Activated T-helper 1 cell treated with anti-CD3 and anti-CD28 coated beads, Interleukin-12 subunit alpha, Interleukin-12 subunit beta, Interleukin-2, Interleukin-4 antibody, amounts not matched to agents 30 ng/mL and 10 ng/mL and 1 ng/mL, durations not matched to agents 14 hours and 24 hours and 36 hours (primary cell): ENCODE measurements at regions of chr17 and their contacts with region 1.

Region 1: GRCh38 chr17:38428112-38428642 is at the start of gene ARHGAP23:
- DNase-seq: peak; percentile 8
- H3K4me3 Mint-ChIP-seq: peak within 1 kb of the TSS; percentile 68
- H3K27ac Mint-ChIP-seq: peak within 1 kb of the TSS; percentile 21
- H3K4me1 Mint-ChIP-seq: peaks cover 6% of the 10 kb centered on the region
- H3K27me3 Mint-ChIP-seq: peaks cover 44% of the 10 kb centered on the region
- total RNA-seq, gene ARHGAP23: 0.57 and 0.88 TPM in 2 replicates

Region 2: GRCh38 chr17:38485146-38485468 is 56.9 kb after region 1 on chr17:
- intact Hi-C with region 1: loop called (anchors 1 kb)
- DNase-seq: no peak
- H3K4me3 Mint-ChIP-seq: no peak overlapping the region
- H3K27ac Mint-ChIP-seq: no peak overlapping the region
- H3K4me1 Mint-ChIP-seq: peaks cover 4% of the 10 kb centered on the region
- H3K27me3 Mint-ChIP-seq: peaks cover 6% of the 10 kb centered on the region

Region 3: GRCh38 chr17:38498186-38498752 is 70.1 kb after region 1 on chr17:
- intact Hi-C with region 1: loop called (anchors 2 kb)
- DNase-seq: no peak
- H3K4me3 Mint-ChIP-seq: no peak overlapping the region
- H3K27ac Mint-ChIP-seq: no peak overlapping the region
- H3K4me1 Mint-ChIP-seq: no peaks in the 10 kb centered on the region
- H3K27me3 Mint-ChIP-seq: peaks cover 3% of the 10 kb centered on the region

Region 4: DNA sequence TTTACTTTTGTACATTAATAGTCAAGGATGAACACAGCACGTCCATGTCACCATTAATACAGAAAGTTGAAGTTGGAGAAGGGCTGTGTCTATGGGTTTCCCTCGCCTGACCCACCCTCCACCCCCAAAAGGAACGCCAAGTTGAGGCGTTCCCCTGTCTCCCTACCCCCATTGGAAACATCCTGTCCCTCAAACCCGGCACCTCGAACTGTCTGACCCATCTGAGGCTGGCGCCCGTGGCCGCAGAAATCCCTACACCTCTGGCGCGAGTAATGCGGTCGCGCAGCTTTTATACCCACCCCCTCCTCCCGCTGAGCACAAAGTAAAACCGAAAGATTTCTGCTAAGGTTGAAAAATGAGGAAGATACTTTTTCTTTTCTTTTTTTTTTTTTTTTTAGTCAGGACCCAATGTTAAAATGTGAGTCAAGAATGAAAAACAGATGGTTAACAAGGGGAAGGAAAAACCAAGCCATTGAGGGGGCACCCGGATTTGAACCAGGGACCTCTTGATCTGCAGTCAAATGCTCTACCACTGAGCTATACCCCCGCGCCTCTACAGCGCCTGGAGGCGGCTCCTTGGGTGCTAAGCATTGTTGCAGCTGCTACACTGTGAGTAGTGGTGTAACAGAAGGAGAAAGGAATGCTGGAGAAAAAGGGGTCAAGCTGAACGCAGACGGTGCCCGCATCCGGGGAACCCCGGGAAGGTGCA is 440.8 kb after region 1 on chr17:
- intact Hi-C with region 1: no loop called
- DNase-seq: peak; percentile 78
- H3K4me3 Mint-ChIP-seq: peak overlapping the region; percentile 91
- H3K27ac Mint-ChIP-seq: peak overlapping the region; percentile 96
- H3K4me1 Mint-ChIP-seq: peaks cover 52% of the 10 kb centered on the region
- H3K27me3 Mint-ChIP-seq: no peaks in the 10 kb centered on the region